GM12878 (cell line): ENCODE measurements at regions of chr6 and their contacts with region 1.

Region 1: DNA sequence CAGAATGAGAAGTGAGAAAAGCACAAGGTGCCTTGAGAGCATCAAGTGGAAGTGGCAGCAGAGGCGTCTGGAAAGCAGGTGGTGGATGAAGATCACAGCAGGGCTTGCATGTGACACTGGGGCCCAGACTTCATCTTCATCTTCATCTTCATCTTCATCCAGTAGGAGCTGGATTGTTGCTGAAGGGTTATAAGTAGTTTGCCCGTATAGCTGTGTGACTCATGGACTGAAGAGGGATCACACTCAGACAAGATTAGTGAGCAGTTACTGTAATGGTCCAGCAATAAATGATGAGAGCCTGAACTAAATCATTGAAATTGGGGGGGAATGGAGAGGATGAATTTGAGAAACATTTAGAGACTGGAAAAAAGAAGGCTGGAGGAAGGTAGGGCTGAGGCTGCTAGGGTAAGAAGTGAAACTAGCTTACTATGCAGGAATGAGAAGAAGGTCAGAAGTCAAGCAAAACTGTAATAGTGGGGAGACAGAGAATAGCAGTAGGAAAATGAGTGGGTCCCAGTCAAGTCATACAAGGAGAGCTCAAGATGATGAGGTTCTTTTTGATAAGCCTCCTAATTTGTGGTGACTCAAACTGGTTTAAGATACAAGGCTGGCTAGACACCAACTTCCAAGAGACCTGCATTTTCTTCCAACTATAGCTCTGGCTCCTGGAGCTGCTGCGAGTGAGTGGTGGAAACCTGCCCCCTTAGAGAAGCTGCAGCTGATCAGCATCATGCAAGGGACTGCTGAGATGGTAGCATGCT is 92.3 kb upstream of the BEND6 start:
- DNase-seq: no peak
- ATAC-seq: peak; percentile 57
- H3K4me3 ChIP-seq: no peak overlapping the region
- H3K27ac ChIP-seq: no peak overlapping the region
- H3K4me1 ChIP-seq: peaks cover 17% of the 10 kb centered on the region
- H3K27me3 ChIP-seq: no peaks in the 10 kb centered on the region
- CTCF ChIP-seq: no peak
- EP300 ChIP-seq: no peak
- POLR2A ChIP-seq: no peak
- RAD21 ChIP-seq: no peak

Region 2: GRCh38 chr6:56091159-56091869 is 771.3 kb before region 1 on chr6:
- CTCF ChIA-PET with region 1: no interaction called
- POLR2A ChIA-PET with region 1: no interaction called
- RAD21 ChIA-PET with region 1: no interaction called
- SMC1A ChIA-PET with region 1: no interaction called
- in situ Hi-C with region 1: no loop called
- intact Hi-C with region 1: no loop called
- DNase-seq: no peak
- ATAC-seq: no peak
- H3K4me3 ChIP-seq: no peak overlapping the region
- H3K27ac ChIP-seq: no peak overlapping the region
- H3K4me1 ChIP-seq: no peaks in the 10 kb centered on the region
- H3K27me3 ChIP-seq: no peaks in the 10 kb centered on the region
- CTCF ChIP-seq: no peak
- EP300 ChIP-seq: no peak
- POLR2A ChIP-seq: no peak
- RAD21 ChIP-seq: no peak

Region 3: GRCh38 chr6:56524891-56525703 is 337.5 kb before region 1 on chr6:
- CTCF ChIA-PET with region 1: no interaction called
- POLR2A ChIA-PET with region 1: no interaction called
- RAD21 ChIA-PET with region 1: no interaction called
- SMC1A ChIA-PET with region 1: no interaction called
- in situ Hi-C with region 1: no loop called
- intact Hi-C with region 1: no loop called
- DNase-seq: no peak
- ATAC-seq: no peak
- H3K4me3 ChIP-seq: no peak overlapping the region
- H3K27ac ChIP-seq: no peak overlapping the region
- H3K4me1 ChIP-seq: no peaks in the 10 kb centered on the region
- H3K27me3 ChIP-seq: no peaks in the 10 kb centered on the region
- CTCF ChIP-seq: no peak
- EP300 ChIP-seq: no peak
- POLR2A ChIP-seq: no peak
- RAD21 ChIP-seq: no peak

Region 4: DNA sequence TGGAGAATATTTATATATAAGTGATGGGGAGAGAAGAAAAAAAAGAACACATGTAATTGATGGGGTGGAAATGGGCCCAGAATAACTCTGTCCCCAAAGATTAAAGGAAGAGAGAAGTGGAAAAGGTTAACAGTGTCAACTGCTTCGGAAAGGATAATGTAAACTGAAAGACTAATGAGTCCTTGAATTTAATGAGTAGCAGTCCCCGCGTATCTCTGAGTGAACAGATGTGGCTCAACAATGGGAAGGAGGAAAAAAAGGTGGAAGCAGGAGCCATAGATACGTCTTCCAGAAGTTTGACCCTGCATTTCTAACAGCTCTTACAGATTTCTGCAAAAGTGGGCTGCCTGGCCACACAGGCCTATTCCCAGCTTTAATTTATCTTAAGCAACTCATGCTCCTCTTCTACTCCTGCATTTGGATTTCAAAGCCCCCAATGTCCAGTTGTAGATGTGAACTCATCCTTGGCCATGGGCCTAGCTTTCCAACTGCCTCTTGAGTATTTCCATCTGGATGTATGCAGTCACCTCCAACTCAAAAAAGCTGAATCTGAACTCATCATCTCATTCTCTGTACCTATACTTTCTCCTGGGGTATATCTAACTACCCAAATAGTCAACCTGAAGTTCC is 281.2 kb before region 1 on chr6:
- CTCF ChIA-PET with region 1: no interaction called
- POLR2A ChIA-PET with region 1: no interaction called
- RAD21 ChIA-PET with region 1: no interaction called
- SMC1A ChIA-PET with region 1: no interaction called
- in situ Hi-C with region 1: no loop called
- intact Hi-C with region 1: no loop called
- DNase-seq: no peak
- ATAC-seq: no peak
- H3K4me3 ChIP-seq: no peak overlapping the region
- H3K27ac ChIP-seq: no peak overlapping the region
- H3K4me1 ChIP-seq: no peaks in the 10 kb centered on the region
- H3K27me3 ChIP-seq: no peaks in the 10 kb centered on the region
- CTCF ChIP-seq: no peak
- EP300 ChIP-seq: no peak
- POLR2A ChIP-seq: no peak
- RAD21 ChIP-seq: no peak

Region 5: GRCh38 chr6:56652994-56653393 is 209.6 kb before region 1 on chr6:
- CTCF ChIA-PET with region 1: interaction called, 3 read pairs
- POLR2A ChIA-PET with region 1: no interaction called
- RAD21 ChIA-PET with region 1: no interaction called
- SMC1A ChIA-PET with region 1: no interaction called
- in situ Hi-C with region 1: loop called (anchors 5 kb)
- intact Hi-C with region 1: no loop called
- DNase-seq: no peak
- ATAC-seq: no peak
- H3K4me3 ChIP-seq: no peak overlapping the region
- H3K27ac ChIP-seq: no peak overlapping the region
- H3K4me1 ChIP-seq: no peaks in the 10 kb centered on the region
- H3K27me3 ChIP-seq: no peaks in the 10 kb centered on the region
- CTCF ChIP-seq: no peak
- EP300 ChIP-seq: no peak
- POLR2A ChIP-seq: no peak
- RAD21 ChIP-seq: no peak

Region 6: DNA sequence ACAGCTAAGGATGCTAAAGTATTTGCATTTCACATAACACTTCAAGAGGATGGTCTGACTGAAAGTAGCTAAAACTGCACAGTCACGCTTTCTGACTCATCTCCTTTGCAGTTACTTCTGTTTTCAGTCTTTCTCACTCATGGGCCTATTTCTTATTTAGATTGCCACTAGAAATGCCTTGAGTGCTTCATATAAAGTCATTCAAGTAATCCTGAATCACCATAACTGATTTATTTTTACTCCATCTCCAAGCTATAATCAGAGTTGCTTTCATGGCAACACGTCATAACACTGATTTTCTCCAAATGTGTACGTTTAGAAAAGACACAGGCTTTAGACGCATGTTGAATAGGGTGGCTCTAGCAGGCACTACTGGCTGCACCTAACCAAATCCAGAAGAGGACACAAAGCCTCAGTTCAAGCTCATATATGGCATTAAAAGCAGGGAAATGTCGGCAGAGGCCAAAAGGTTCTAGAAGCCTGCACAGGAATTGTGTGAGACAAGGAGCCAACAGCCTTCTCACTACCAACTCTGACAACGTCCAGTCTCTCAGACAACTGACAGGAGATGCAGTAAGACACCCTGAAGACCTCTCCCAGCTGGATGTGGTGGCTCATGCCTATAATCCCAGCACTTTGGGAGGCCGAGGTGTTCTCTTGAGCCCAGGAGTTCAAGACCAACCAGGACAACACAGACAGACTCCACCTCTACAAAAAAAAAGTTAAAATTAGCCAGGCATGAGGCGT is 28.3 kb after region 1 on chr6:
- CTCF ChIA-PET with region 1: interaction called, 8 read pairs
- POLR2A ChIA-PET with region 1: interaction called, 3 read pairs
- RAD21 ChIA-PET with region 1: interaction called, 27 read pairs
- SMC1A ChIA-PET with region 1: interaction called, 4 read pairs
- in situ Hi-C with region 1: no loop called
- intact Hi-C with region 1: no loop called
- DNase-seq: peak; percentile 92
- ATAC-seq: peak; percentile 94
- H3K4me3 ChIP-seq: peak overlapping the region; percentile 43; the same call in 1 of the 2 replicates
- H3K27ac ChIP-seq: peak overlapping the region; percentile 95
- H3K4me1 ChIP-seq: peaks cover 30% of the 10 kb centered on the region
- H3K27me3 ChIP-seq: no peaks in the 10 kb centered on the region
- CTCF ChIP-seq: no peak
- EP300 ChIP-seq: peak; percentile 78 to 86; a peak in 3 of 4 replicates
- POLR2A ChIP-seq: no peak
- RAD21 ChIP-seq: no peak

Region 7: GRCh38 chr6:56951049-56951831 is 88.6 kb after region 1 on chr6:
- CTCF ChIA-PET with region 1: no interaction called
- POLR2A ChIA-PET with region 1: no interaction called
- RAD21 ChIA-PET with region 1: no interaction called
- SMC1A ChIA-PET with region 1: no interaction called
- in situ Hi-C with region 1: no loop called
- intact Hi-C with region 1: no loop called
- DNase-seq: no peak
- ATAC-seq: 0 out of 3 replicates have a peak, but pooled peaks have one; percentile 2
- H3K4me3 ChIP-seq: no peak overlapping the region
- H3K27ac ChIP-seq: peak overlapping the region; percentile 17; the same call in 1 of the 2 replicates
- H3K4me1 ChIP-seq: peaks cover 17% of the 10 kb centered on the region
- H3K27me3 ChIP-seq: no peaks in the 10 kb centered on the region
- CTCF ChIP-seq: no peak
- EP300 ChIP-seq: no peak
- POLR2A ChIP-seq: no peak
- RAD21 ChIP-seq: no peak